PC-9 (cell line): ENCODE measurements at regions of chr19 and their contacts with region 1.

Region 1: DNA sequence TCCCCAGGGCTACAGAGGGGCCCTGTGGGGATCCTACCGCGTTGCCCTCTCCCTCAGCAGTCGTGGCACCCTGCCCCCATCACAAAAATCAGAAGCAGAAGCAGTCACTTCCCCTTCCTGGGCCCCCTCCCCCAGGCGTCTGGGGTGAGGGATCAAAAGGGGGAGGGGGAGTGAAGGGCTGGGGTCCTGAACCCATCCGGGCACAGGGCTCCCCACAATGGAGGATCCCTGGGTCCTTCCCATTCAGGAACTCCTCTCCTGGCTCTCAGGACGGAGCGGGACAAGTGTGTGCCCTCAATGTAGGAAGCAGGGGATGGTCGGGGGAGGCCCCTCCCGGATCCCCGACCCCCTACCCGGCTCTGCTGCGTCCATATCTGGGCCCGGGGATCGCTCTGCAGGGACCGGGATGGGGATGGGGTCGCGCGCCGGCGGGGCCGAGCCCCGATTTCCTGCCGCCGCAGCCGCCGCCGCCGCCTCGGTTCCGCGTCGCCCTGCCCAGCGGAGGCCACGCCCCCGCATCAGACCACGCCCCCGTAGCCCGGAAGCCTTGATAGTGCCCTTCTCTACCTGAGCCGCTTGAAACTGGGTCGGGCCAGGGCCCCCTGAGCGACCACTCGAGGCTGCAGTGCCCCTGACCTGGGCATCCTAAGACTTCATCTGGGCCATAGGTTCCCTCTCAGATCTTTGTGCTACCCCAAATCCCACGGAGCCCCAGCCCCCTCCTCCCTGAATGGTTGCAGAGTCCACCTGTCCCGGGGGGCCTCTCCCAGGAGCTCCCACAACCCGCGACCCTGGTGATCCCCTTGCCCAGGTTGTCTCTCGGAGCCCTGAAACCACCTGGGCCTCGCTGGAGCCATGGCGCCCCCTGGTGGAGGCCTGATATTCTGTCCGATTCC is at the start of gene GMIP:
- DNase-seq: peak; percentile 63 to 80
- H3K4me3 ChIP-seq: peak within 1 kb of the TSS; percentile 96
- H3K27ac ChIP-seq: peak within 1 kb of the TSS; percentile 52
- H3K4me1 ChIP-seq: no peaks in the 10 kb centered on the region
- H3K27me3 ChIP-seq: no peaks in the 10 kb centered on the region
- CTCF ChIP-seq: peak; percentile 100
- total RNA-seq, gene GMIP: 15.4 and 18.2 TPM in 2 replicates

Region 2: GRCh38 chr19:19540715-19541440 is 102.5 kb before region 1 on chr19:
- CTCF ChIA-PET with region 1: no interaction called
- POLR2A ChIA-PET with region 1: no interaction called
- intact Hi-C with region 1: no loop called
- DNase-seq: peak; percentile 86 to 91
- H3K4me3 ChIP-seq: peak overlapping the region; percentile 58
- H3K27ac ChIP-seq: no peak overlapping the region
- H3K4me1 ChIP-seq: no peaks in the 10 kb centered on the region
- H3K27me3 ChIP-seq: no peaks in the 10 kb centered on the region
- CTCF ChIP-seq: no peak; the same call in 1 of the 2 replicates

Region 3: GRCh38 chr19:19554074-19555023 is 89.1 kb before region 1 on chr19:
- CTCF ChIA-PET with region 1: no interaction called
- POLR2A ChIA-PET with region 1: no interaction called
- intact Hi-C with region 1: loop called (anchors 5 kb)
- DNase-seq: peak in 1 of 2 experiments; percentile 31
- H3K4me3 ChIP-seq: no peak overlapping the region
- H3K27ac ChIP-seq: no peak overlapping the region
- H3K4me1 ChIP-seq: no peaks in the 10 kb centered on the region
- H3K27me3 ChIP-seq: no peaks in the 10 kb centered on the region
- CTCF ChIP-seq: peak; percentile 92

Region 4: DNA sequence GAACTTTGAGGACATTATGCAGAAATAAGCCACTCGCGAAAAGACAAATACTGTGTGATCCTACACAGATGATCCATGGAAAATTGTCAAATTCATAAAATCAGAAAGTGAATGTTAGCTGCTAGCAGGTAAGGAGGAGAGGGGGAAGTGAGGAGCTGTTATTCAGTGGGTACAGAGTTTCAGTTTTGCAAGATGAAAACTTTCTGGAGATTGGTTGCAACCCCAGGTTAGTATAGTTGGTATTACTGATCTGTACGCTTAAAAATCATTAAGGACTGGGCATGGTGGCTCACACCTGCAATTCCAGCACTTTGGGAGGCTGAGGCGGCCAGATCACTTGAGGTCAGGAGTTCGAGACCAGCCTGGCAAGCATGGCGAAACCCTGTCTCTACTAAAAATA is 43.2 kb after region 1 on chr19:
- CTCF ChIA-PET with region 1: no interaction called
- POLR2A ChIA-PET with region 1: no interaction called
- intact Hi-C with region 1: no loop called
- DNase-seq: no peak
- H3K4me3 ChIP-seq: no peak overlapping the region
- H3K27ac ChIP-seq: no peak overlapping the region
- H3K4me1 ChIP-seq: no peaks in the 10 kb centered on the region
- H3K27me3 ChIP-seq: no peaks in the 10 kb centered on the region
- CTCF ChIP-seq: no peak

Region 5: GRCh38 chr19:19711934-19712828 is 68.8 kb after region 1 on chr19:
- CTCF ChIA-PET with region 1: no interaction called
- POLR2A ChIA-PET with region 1: no interaction called
- intact Hi-C with region 1: no loop called
- DNase-seq: no peak
- H3K4me3 ChIP-seq: peak overlapping the region; percentile 23
- H3K27ac ChIP-seq: no peak overlapping the region
- H3K4me1 ChIP-seq: no peaks in the 10 kb centered on the region
- H3K27me3 ChIP-seq: no peaks in the 10 kb centered on the region
- CTCF ChIP-seq: no peak

Region 6: DNA sequence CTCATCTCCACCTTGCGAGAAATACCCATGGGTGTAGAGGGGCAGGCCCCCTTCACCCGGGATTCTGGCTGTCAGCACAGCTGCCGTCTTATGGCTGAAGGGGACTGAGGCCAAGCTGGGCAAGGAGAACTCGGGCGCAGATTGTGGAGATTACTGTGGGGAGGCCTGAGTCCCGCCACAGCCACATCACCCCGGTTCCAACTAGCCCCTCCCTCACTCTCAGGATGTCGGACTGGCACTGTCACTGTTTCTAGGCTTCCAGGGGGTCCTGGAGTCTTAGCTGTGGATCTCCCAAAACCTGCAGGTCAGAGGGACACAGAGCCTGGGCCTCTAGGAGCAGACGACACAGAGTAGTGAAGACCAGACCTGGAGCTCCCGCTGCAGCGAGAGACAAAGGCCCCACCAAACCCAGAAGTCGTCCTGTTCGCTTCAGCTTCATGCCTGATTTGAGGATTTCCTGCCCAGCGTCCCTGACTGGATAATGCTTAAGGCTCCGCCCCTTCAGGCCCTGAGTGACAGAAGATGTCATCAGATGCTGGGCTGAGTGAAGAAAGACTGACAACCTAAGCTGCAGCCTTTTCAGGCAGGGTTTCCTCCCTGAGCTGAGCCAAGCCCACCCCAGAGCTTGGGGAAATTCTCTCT is 313.1 kb after region 1 on chr19:
- CTCF ChIA-PET with region 1: no interaction called
- POLR2A ChIA-PET with region 1: no interaction called
- intact Hi-C with region 1: loop called (anchors 10 kb)
- DNase-seq: no peak
- H3K4me3 ChIP-seq: no peak overlapping the region
- H3K27ac ChIP-seq: no peak overlapping the region
- H3K4me1 ChIP-seq: no peaks in the 10 kb centered on the region
- H3K27me3 ChIP-seq: peaks cover 9% of the 10 kb centered on the region; the same call in 1 of the 2 replicates
- CTCF ChIP-seq: no peak